Endothelial cell of umbilical vein (primary cell): ENCODE measurements at regions of chr10 and their contacts with region 1.

Region 1: DNA sequence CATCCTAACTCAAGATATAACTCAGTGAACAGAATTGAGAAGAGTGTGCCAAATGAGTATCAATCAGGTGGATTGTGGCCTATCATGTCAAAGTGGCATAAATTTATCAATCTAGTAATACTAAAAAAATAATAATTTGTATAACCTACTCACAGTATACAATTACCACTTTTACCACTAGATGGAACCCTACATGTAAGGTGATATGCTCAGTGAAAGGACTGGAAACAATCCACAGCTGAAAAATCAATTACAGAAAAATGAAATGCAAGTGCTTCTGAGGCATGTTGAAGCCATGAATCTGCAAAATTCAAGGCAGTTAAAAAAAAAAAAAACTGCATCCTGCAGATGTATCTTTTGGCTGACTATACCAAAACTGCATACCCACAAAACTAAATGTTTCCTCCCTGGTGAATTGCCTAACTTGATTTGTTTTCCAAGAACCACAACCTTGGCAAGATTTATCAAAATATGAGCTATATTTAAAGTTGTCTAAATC is 13.9 kb downstream of the ARHGAP19 start:
- DNase-seq: peak; percentile 86
- H3K4me3 ChIP-seq: no peak overlapping the region
- H3K27ac ChIP-seq: no peak overlapping the region
- H3K4me1 ChIP-seq: peaks cover 4% of the 10 kb centered on the region
- H3K27me3 ChIP-seq: no peaks in the 10 kb centered on the region
- CTCF ChIP-seq: peak; percentile 30 to 41
- POLR2A ChIP-seq: no peak

Region 2: DNA sequence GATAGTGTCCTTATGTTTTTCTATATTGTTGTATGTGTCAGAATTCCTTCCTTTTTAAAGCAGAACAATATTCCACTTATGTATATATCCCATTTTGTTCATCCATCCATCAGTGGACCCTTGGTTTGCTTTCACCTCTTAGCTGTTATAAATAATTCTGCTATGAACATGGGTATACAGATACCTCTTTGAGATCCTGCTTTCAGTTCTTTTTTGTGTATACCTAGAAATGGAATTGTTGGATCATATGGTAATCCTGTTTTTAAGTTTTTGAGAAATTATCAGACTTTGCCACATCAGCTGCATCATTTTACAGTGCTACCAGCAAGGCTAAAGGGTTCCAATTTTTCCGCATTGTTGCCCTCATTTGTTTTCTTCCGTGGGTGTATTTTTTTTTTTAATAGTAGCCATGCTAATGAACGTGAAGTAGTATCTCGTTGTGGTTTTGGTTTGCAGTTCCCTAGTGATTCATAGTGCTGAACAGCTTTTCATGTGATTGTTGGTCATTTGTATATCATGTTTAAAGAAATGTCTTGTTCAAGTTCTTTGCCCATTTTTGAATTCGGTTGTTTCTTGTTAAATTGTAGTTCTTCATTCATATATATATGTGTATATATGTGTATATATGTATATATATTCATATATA is 358.6 kb before region 1 on chr10:
- CTCF ChIA-PET with region 1: no interaction called
- POLR2A ChIA-PET with region 1: no interaction called
- dilution Hi-C with region 1: no loop called
- intact Hi-C with region 1: no loop called
- DNase-seq: no peak
- H3K4me3 ChIP-seq: no peak overlapping the region
- H3K27ac ChIP-seq: no peak overlapping the region
- H3K4me1 ChIP-seq: no peaks in the 10 kb centered on the region
- H3K27me3 ChIP-seq: no peaks in the 10 kb centered on the region
- CTCF ChIP-seq: no peak
- POLR2A ChIP-seq: no peak

Region 3: DNA sequence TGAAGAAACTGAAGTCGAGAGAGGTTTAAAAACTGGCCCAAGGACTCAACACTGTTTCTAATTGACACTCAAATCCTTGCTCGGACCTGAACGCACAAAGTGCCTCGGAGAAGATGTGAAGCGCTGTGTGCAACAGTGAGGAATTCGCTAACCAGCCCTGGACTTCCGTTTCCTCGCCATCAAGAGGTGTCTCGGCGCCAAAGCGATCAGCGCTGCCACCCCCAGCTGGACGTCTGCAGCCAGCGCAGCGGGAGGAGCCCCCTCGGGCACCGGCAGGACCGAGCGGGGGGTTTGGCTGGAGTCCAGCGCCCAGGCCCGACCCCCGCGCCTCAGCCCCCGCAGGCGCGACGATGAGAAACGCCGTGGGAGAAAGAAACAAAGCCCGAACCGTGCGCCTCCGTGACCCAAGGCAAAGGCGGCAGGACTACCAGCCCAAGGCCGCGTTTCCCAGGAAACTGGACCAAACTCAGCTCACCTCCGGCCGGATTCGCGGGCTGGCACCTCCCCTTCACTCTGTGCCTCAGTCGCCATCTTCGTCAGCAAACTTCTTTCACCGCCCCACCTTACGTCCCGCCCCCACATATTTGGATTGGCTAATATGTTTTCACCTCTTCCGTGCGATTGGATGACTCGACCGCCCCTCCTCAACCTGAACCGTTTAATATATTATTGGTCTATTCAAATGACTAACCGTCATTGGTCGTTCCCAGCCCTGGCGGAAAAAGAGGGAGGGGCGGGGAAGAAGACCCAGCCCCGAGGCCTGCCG is 13.7 kb after region 1 on chr10 and contains the start of gene ARHGAP19:
- CTCF ChIA-PET with region 1: interaction called, 27 read pairs
- POLR2A ChIA-PET with region 1: no interaction called
- dilution Hi-C with region 1: no loop called
- intact Hi-C with region 1: no loop called
- DNase-seq: peak; percentile 99
- H3K4me3 ChIP-seq: peak within 1 kb of the TSS; percentile 59 to 88 (median 65)
- H3K27ac ChIP-seq: peak within 1 kb of the TSS; percentile 85
- H3K4me1 ChIP-seq: no peaks in the 10 kb centered on the region
- H3K27me3 ChIP-seq: no peaks in the 10 kb centered on the region
- CTCF ChIP-seq: peak; percentile 17 to 33
- POLR2A ChIP-seq: peak; percentile 85
- total RNA-seq, gene ARHGAP19: 19.1 and 20.0 TPM in 2 replicates

Region 4: GRCh38 chr10:97334370-97335175 is 56.0 kb after region 1 on chr10 and contains the start of gene FRAT2:
- CTCF ChIA-PET with region 1: interaction called, 73 read pairs
- POLR2A ChIA-PET with region 1: no interaction called
- dilution Hi-C with region 1: no loop called
- intact Hi-C with region 1: loop called (anchors 2 kb)
- DNase-seq: peak; percentile 91
- H3K4me3 ChIP-seq: peak within 1 kb of the TSS; percentile 39 to 84 (median 80)
- H3K27ac ChIP-seq: peak within 1 kb of the TSS; percentile 100
- H3K4me1 ChIP-seq: peaks cover 11% of the 10 kb centered on the region
- H3K27me3 ChIP-seq: peaks cover 20 to 29% of the 10 kb centered on the region in 2 experiments
- CTCF ChIP-seq: no peak
- POLR2A ChIP-seq: peak; percentile 56
- total RNA-seq, gene FRAT2: 11.3 and 11.5 TPM in 2 replicates

Region 5: DNA sequence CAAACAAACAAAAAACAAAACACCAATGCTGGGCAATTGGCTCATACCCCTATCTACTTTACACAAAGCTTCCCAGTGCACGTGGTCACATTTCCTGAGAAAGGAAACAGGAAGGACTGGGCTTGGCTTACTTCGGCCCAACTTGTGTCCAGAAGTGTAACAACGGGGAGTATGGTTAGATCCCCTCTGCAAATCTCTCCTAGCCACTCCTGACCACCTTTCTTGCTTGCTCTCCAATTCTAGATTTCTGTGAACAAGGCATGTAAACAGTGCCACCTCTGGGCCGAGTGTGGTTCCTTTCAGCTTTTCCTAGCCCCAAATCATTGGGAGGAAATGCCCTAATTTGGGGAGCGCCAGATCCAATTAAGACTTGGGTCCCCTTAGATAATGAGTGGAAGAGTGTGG is 77.0 kb after region 1 on chr10:
- CTCF ChIA-PET with region 1: interaction called, 79 read pairs
- POLR2A ChIA-PET with region 1: interaction called, 3 read pairs
- dilution Hi-C with region 1: no loop called
- intact Hi-C with region 1: loop called (anchors 2 kb)
- DNase-seq: peak; percentile 80
- H3K4me3 ChIP-seq: no peak overlapping the region
- H3K27ac ChIP-seq: peak overlapping the region; percentile 36
- H3K4me1 ChIP-seq: peaks cover 13% of the 10 kb centered on the region
- H3K27me3 ChIP-seq: no peaks in the 10 kb centered on the region
- CTCF ChIP-seq: peak; percentile 39 to 45
- POLR2A ChIP-seq: no peak

Region 6: DNA sequence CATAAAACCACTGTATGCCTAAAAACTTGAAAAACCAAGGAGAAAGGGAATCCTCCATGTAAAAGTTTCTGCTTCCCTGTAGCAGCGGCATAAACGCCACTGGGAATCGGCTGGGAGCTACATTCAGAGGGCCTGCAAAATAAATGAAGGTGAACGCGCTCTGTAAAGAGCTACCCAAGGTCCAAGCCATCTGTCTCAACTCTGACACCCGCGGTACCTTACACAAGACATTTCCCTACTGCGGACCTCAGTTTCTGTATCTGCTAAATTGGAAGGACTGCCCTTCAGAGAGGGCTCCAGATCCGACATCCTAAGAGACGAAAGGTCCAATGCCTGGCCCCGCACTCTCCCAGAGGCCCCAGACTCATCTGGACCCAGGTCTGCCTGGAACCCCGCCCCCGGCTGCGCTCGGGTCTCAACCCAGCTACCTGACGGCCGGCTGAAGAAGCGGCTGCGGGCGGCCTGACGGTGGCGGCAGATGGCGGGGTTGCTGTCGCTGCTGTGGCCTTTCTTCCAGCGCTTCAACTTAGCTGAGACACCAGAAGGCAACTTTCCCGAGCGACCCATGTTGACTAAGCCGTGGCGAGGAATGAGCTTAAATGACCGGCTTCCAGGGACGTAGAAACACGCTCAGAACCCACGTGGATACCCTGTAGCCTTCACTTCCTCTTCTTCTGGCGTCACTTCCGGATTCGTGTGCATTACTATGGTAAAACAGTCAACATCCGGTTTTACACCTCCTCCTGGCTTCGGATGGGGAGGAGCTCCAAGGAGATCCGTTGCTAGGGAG is 122.3 kb after region 1 on chr10 and contains the start of gene RRP12:
- CTCF ChIA-PET with region 1: interaction called, 10 read pairs
- POLR2A ChIA-PET with region 1: no interaction called
- dilution Hi-C with region 1: no loop called
- intact Hi-C with region 1: no loop called
- DNase-seq: peak; percentile 97
- H3K4me3 ChIP-seq: peak within 1 kb of the TSS; percentile 54 to 84 (median 58)
- H3K27ac ChIP-seq: peak within 1 kb of the TSS; percentile 75
- H3K4me1 ChIP-seq: peaks cover 10% of the 10 kb centered on the region
- H3K27me3 ChIP-seq: no peaks in the 10 kb centered on the region
- CTCF ChIP-seq: peak in 1 of 2 donors; percentile 5
- POLR2A ChIP-seq: no peak
- total RNA-seq, gene RRP12: 35.8 and 40.9 TPM in 2 replicates

Region 7: GRCh38 chr10:97612386-97612785 is 333.8 kb after region 1 on chr10:
- CTCF ChIA-PET with region 1: no interaction called
- POLR2A ChIA-PET with region 1: no interaction called
- dilution Hi-C with region 1: no loop called
- intact Hi-C with region 1: no loop called
- DNase-seq: peak; percentile 71
- H3K4me3 ChIP-seq: no peak overlapping the region
- H3K27ac ChIP-seq: no peak overlapping the region
- H3K4me1 ChIP-seq: no peaks in the 10 kb centered on the region
- H3K27me3 ChIP-seq: no peaks in the 10 kb centered on the region
- CTCF ChIP-seq: peak in 1 of 2 donors; percentile 38
- POLR2A ChIP-seq: no peak